PC-9 (cell line): ENCODE measurements at regions of chrX and their contacts with region 1.

Region 1: DNA sequence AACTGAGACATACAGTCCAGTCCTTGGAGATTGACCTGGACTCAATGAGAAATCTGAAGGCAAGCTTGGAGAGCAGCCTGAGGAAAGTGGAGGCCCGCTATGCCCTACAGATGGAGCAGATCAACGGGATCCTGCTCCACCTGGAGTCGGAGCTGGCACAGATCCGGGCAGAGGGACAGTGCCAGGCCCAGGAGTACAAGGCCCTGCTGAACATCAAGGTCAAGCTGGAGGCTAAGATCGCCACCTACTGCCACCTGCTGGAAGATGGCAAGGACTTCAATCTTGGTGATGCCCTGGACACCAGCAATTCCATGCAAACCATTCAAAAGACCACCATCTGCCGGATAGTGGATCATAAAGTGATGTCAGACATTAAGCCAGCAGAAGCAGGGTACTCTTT is 20.4 kb upstream of the FRMPD3 start:
- DNase-seq: peak; percentile 35 to 40
- H3K4me3 ChIP-seq: no peak overlapping the region
- H3K27ac ChIP-seq: no peak overlapping the region
- H3K4me1 ChIP-seq: no peaks in the 10 kb centered on the region
- H3K27me3 ChIP-seq: no peaks in the 10 kb centered on the region
- CTCF ChIP-seq: peak; percentile 71

Region 2: DNA sequence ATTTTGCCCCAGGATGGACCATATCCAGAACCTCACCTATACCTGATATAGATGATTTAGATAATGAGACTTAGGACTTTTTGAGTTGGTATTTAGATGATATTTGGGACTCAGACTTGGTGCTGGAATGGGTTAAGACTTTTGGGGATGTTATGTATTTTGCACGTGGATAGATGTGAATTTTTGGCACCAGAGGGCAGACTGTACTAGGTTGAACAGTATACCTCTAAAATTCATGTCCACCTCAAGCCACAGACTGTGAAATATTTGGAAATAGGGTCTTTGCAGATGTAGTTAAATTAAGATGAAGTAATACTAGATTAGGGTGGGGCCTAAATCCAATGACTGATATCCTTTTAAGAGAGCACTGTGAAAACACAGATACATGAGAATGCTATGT is 326.1 kb before region 1 on chrX:
- CTCF ChIA-PET with region 1: no interaction called
- POLR2A ChIA-PET with region 1: no interaction called
- intact Hi-C with region 1: loop called (anchors 5 kb)
- DNase-seq: no peak
- H3K4me3 ChIP-seq: no peak overlapping the region
- H3K27ac ChIP-seq: no peak overlapping the region
- H3K4me1 ChIP-seq: no peaks in the 10 kb centered on the region
- H3K27me3 ChIP-seq: no peaks in the 10 kb centered on the region
- CTCF ChIP-seq: peak; percentile 64

Region 3: GRCh38 chrX:107348051-107348450 is 81.0 kb before region 1 on chrX:
- CTCF ChIA-PET with region 1: no interaction called
- POLR2A ChIA-PET with region 1: no interaction called
- intact Hi-C with region 1: no loop called
- DNase-seq: no peak
- H3K4me3 ChIP-seq: no peak overlapping the region
- H3K27ac ChIP-seq: no peak overlapping the region
- H3K4me1 ChIP-seq: no peaks in the 10 kb centered on the region
- H3K27me3 ChIP-seq: peaks cover 36% of the 10 kb centered on the region
- CTCF ChIP-seq: no peak